Activated CD8-positive, alpha-beta T cell treated with anti-CD3 and anti-CD28 coated beads, Interleukin-2, amount 10 ng/mL, durations not matched to agents 7 days and 5 days (primary cell): ENCODE measurements at regions of chr6 and their contacts with region 1.

Region 1: DNA sequence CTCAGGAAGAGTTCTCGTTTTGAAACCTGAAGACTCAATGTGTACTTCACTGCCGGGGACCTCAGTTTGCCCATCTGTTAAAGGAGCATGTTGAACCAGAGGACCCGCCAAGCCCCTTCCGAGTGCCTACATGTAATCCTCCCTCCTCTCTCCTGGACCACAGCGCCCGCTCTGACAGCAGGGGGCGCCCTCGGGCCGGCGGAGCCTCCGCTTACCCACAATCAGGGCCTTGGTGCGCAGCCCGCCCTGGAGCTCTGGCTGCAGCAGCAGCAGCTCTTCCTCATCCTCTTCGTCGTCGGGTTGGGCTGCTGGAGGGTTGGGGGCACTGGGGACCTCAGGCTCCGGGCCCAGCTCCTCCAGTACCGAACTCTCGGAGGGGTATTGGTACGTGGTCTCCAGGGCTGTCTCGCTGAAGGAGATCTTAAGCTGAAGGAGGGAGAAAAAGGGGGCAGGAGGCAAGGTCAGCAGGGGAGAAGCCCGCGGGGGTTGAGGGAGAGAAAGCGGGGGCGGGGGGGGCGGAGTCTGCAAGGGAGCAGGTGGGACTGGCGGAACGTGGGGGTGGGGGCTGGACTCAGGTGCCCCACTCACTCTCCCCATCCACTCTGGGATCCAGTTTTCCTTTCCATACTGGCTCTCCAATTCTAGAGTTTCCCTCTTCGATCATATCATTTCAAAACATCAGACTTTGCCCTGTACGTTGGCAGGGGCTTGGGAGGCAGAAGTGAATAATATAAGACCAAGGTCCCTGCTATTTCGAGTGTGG is 6.3 kb upstream of the DHX16 start:
- DNase-seq: peak; percentile 94
- ATAC-seq: peak; percentile 54
- H3K4me3 Mint-ChIP-seq: peak overlapping the region; percentile 93
- H3K27ac Mint-ChIP-seq: peak overlapping the region; percentile 98
- H3K4me1 Mint-ChIP-seq: peaks cover 30% of the 10 kb centered on the region
- H3K27me3 Mint-ChIP-seq: no peaks in the 10 kb centered on the region

Region 2: GRCh38 chr6:30703821-30704360 is 24.7 kb after region 1 on chr6:
- CTCF ChIA-PET with region 1: interaction called, 686 read pairs
- POLR2A ChIA-PET with region 1: interaction called, 7 read pairs
- DNase-seq: no peak
- ATAC-seq: no peak
- H3K4me3 Mint-ChIP-seq: no peak overlapping the region
- H3K27ac Mint-ChIP-seq: no peak overlapping the region
- H3K4me1 Mint-ChIP-seq: no peaks in the 10 kb centered on the region
- H3K27me3 Mint-ChIP-seq: no peaks in the 10 kb centered on the region

Region 3: GRCh38 chr6:30711758-30712380 is 32.7 kb after region 1 on chr6:
- CTCF ChIA-PET with region 1: interaction called, 686 read pairs
- POLR2A ChIA-PET with region 1: interaction called, 343 read pairs
- DNase-seq: peak; percentile 57
- ATAC-seq: peak; percentile 83
- H3K4me3 Mint-ChIP-seq: peak overlapping the region; percentile 63
- H3K27ac Mint-ChIP-seq: peak overlapping the region; percentile 81
- H3K4me1 Mint-ChIP-seq: peaks cover 61% of the 10 kb centered on the region
- H3K27me3 Mint-ChIP-seq: no peaks in the 10 kb centered on the region

Region 4: GRCh38 chr6:30717042-30717844 is 38.1 kb after region 1 on chr6 and contains the start of gene MDC1:
- CTCF ChIA-PET with region 1: interaction called, 686 read pairs
- POLR2A ChIA-PET with region 1: interaction called, 343 read pairs
- DNase-seq: peak; percentile 100
- ATAC-seq: peak; percentile 81
- H3K4me3 Mint-ChIP-seq: peak within 1 kb of the TSS; percentile 98
- H3K27ac Mint-ChIP-seq: peak within 1 kb of the TSS; percentile 100
- H3K4me1 Mint-ChIP-seq: peaks cover 64% of the 10 kb centered on the region
- H3K27me3 Mint-ChIP-seq: no peaks in the 10 kb centered on the region
- total RNA-seq, gene MDC1: 48.5 to 52.4 TPM

Region 5: DNA sequence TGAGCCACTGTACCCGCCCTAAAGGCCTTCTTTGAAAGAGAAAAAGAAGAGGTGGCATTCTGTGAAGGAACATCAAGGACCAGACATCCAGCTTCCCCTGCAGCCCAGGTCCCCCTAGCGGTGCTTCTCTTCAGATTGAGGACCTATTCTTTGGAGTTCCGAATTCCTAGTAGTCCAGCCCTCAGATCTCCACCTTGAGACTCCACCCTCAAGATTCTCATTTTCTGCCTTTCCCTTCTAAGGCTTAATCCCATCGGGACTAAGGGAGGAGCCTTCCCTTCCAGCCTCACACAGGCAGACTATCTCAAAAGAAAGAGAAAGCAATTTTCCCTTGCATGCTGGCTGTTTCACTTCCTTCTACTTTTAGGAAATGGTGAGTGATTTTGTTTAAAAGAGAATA is 363.7 kb after region 1 on chr6:
- CTCF ChIA-PET with region 1: no interaction called
- POLR2A ChIA-PET with region 1: no interaction called
- DNase-seq: peak; percentile 40
- ATAC-seq: no peak
- H3K4me3 Mint-ChIP-seq: no peak overlapping the region
- H3K27ac Mint-ChIP-seq: no peak overlapping the region
- H3K4me1 Mint-ChIP-seq: peaks cover 2% of the 10 kb centered on the region
- H3K27me3 Mint-ChIP-seq: peaks cover 14% of the 10 kb centered on the region